Caco-2 (cell line): ENCODE measurements at regions of chr4 and their contacts with region 1.

Region 1: GRCh38 chr4:87399954-87400353 is 9.0 kb upstream of the HSD17B11 start:
- DNase-seq: no peak
- H3K4me3 ChIP-seq: no peak overlapping the region
- H3K4me3 Mint-ChIP-seq: no peak overlapping the region
- H3K27ac Mint-ChIP-seq: no peak overlapping the region
- H3K4me1 ChIP-seq: no peaks in the 10 kb centered on the region
- H3K4me1 Mint-ChIP-seq: no peaks in the 10 kb centered on the region
- H3K27me3 ChIP-seq: no peaks in the 10 kb centered on the region
- H3K27me3 Mint-ChIP-seq: no peaks in the 10 kb centered on the region
- CTCF ChIP-seq: no peak

Region 2: GRCh38 chr4:87317543-87317942 is 82.4 kb before region 1 on chr4:
- CTCF ChIA-PET with region 1: no interaction called
- POLR2A ChIA-PET with region 1: no interaction called
- intact Hi-C with region 1: no loop called
- DNase-seq: peak in 1 of 2 experiments; percentile 32
- H3K4me3 ChIP-seq: no peak overlapping the region
- H3K4me3 Mint-ChIP-seq: no peak overlapping the region
- H3K27ac Mint-ChIP-seq: no peak overlapping the region
- H3K4me1 ChIP-seq: no peaks in the 10 kb centered on the region
- H3K4me1 Mint-ChIP-seq: no peaks in the 10 kb centered on the region
- H3K27me3 ChIP-seq: no peaks in the 10 kb centered on the region
- H3K27me3 Mint-ChIP-seq: no peaks in the 10 kb centered on the region
- CTCF ChIP-seq: no peak

Region 3: GRCh38 chr4:88728146-88728545 is 1328.2 kb after region 1 on chr4:
- CTCF ChIA-PET with region 1: interaction called, 12 read pairs
- POLR2A ChIA-PET with region 1: no interaction called
- intact Hi-C with region 1: no loop called
- DNase-seq: no peak
- H3K4me3 ChIP-seq: no peak overlapping the region
- H3K4me3 Mint-ChIP-seq: no peak overlapping the region
- H3K27ac Mint-ChIP-seq: no peak overlapping the region
- H3K4me1 ChIP-seq: no peaks in the 10 kb centered on the region
- H3K4me1 Mint-ChIP-seq: no peaks in the 10 kb centered on the region
- H3K27me3 ChIP-seq: no peaks in the 10 kb centered on the region
- H3K27me3 Mint-ChIP-seq: no peaks in the 10 kb centered on the region
- CTCF ChIP-seq: no peak